ENCODE measurements at regions of chr10 and their contacts with region 1.

Region 1: GRCh38 chr10:35635576-35635975 is 6.5 kb downstream of the FZD8 start:
- DNase-seq: peak; percentile 100
- ATAC-seq: peak; percentile 21
- H3K4me3 ChIP-seq: peak overlapping the region; percentile 69
- H3K27ac ChIP-seq: peak overlapping the region; percentile 71
- H3K4me1 ChIP-seq: peaks cover 63% of the 10 kb centered on the region
- H3K27me3 ChIP-seq: no peaks in the 10 kb centered on the region
- CTCF ChIP-seq: peak; percentile 100

Region 2: GRCh38 chr10:35588836-35589235 is 46.7 kb before region 1 on chr10:
- CTCF ChIA-PET with region 1: no interaction called
- POLR2A ChIA-PET with region 1: no interaction called
- intact Hi-C with region 1: no loop called
- DNase-seq: no peak
- ATAC-seq: no peak
- H3K4me3 ChIP-seq: no peak overlapping the region
- H3K27ac ChIP-seq: no peak overlapping the region
- H3K4me1 ChIP-seq: no peaks in the 10 kb centered on the region
- H3K27me3 ChIP-seq: no peaks in the 10 kb centered on the region
- CTCF ChIP-seq: no peak

Region 3: DNA sequence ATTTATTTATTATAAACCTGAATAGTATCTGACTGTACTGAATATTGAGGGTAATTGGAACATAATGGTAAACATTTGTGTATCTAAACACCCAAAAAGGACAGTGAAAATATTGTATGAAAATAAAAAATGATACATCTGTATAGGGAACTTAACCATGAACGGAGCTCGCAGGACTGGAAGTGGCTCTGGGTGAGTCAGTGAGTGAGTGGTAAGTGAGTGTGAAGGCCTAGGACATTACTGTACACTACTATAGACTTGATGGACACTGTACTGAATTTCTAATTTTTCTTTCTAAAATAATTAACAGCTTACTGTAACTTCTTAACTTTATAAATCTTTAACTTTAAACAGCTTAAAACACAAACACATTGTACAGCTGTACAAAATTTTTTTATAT is 461.0 kb after region 1 on chr10:
- CTCF ChIA-PET with region 1: interaction called, 11 read pairs
- POLR2A ChIA-PET with region 1: interaction called, 9 read pairs
- intact Hi-C with region 1: loop called (anchors 1 kb)
- DNase-seq: peak; percentile 97
- ATAC-seq: peak; percentile 71
- H3K4me3 ChIP-seq: no peak overlapping the region
- H3K27ac ChIP-seq: peak overlapping the region; percentile 58
- H3K4me1 ChIP-seq: peaks cover 29% of the 10 kb centered on the region
- H3K27me3 ChIP-seq: no peaks in the 10 kb centered on the region
- CTCF ChIP-seq: no peak

Region 4: DNA sequence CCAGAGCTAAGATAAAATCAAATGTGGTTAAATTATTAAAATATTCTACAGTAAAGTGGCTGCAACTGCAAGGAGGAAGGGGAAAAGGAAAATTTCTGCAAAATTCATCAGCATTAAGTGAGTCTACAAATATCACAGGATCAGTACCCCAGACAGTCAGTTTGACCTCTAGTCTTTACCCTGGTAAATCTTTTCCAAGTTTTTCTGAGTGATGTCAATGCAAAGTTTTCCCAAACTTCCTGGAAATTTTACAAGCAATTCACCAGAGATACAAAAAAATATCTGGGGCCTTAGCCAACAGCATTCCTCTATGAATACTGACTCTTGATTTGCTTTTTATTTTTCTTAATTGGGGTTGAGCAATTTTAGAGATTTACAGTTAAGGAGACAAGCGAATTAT is 545.8 kb after region 1 on chr10:
- CTCF ChIA-PET with region 1: no interaction called
- POLR2A ChIA-PET with region 1: no interaction called
- intact Hi-C with region 1: no loop called
- DNase-seq: peak; percentile 73
- ATAC-seq: peak; percentile 69
- H3K4me3 ChIP-seq: no peak overlapping the region
- H3K27ac ChIP-seq: no peak overlapping the region
- H3K4me1 ChIP-seq: peaks cover 9% of the 10 kb centered on the region
- H3K27me3 ChIP-seq: no peaks in the 10 kb centered on the region
- CTCF ChIP-seq: no peak

Region 5: DNA sequence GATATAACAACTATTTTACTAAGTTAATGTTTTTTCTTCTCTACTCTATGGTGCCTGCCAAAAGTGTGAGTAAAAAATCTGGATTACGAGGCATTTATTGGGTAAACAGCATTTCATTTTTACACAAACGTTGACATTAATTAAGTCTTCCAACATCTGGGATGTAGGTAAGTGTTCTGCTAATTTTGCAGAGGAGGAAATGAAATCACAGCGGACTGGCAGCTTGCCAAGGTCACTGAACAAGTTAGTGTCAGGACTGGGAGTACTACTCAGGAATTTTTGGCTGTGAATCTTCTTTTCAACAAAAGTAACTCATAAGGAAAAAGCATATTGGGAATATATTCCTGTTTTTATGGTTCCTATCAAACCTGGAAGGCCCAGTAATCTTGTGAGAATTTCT is 618.6 kb after region 1 on chr10:
- CTCF ChIA-PET with region 1: interaction called, 3 read pairs
- POLR2A ChIA-PET with region 1: no interaction called
- intact Hi-C with region 1: loop called (anchors 10 kb)
- DNase-seq: peak; percentile 75
- ATAC-seq: peak; percentile 25
- H3K4me3 ChIP-seq: no peak overlapping the region
- H3K27ac ChIP-seq: no peak overlapping the region
- H3K4me1 ChIP-seq: peaks cover 21% of the 10 kb centered on the region
- H3K27me3 ChIP-seq: no peaks in the 10 kb centered on the region
- CTCF ChIP-seq: no peak

Region 6: GRCh38 chr10:36534471-36535002 is 899.0 kb after region 1 on chr10:
- CTCF ChIA-PET with region 1: interaction called, 11 read pairs
- POLR2A ChIA-PET with region 1: interaction called, 4 read pairs
- intact Hi-C with region 1: loop called (anchors 1 kb)
- DNase-seq: peak; percentile 100
- ATAC-seq: peak; percentile 82
- H3K4me3 ChIP-seq: no peak overlapping the region
- H3K27ac ChIP-seq: peak overlapping the region; percentile 83
- H3K4me1 ChIP-seq: peaks cover 63% of the 10 kb centered on the region
- H3K27me3 ChIP-seq: no peaks in the 10 kb centered on the region
- CTCF ChIP-seq: no peak

Region 7: DNA sequence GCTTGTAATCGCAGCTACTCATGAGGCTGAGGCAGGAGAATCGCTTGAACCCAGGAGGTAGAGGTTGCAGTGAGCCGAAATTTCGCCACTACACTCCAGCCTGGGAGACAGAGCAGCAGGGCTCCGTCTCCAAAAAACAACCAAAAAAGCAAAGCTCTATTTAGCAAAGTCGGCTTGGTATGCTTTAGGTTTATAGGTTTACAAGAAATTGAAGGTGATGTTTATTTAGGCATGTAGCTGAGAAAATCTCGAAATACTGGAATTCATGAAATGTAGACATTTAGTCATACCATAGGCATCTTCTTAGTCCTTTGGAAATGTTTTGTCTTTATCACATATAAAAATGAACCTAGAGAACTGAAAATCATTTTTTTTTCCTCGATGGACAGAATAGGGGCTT is 1036.0 kb after region 1 on chr10:
- CTCF ChIA-PET with region 1: interaction called, 3 read pairs
- POLR2A ChIA-PET with region 1: no interaction called
- intact Hi-C with region 1: loop called (anchors 1 kb)
- DNase-seq: peak; percentile 99
- ATAC-seq: peak; percentile 66
- H3K4me3 ChIP-seq: peak overlapping the region; percentile 26; the same call in 1 of the 2 replicates
- H3K27ac ChIP-seq: peak overlapping the region; percentile 70
- H3K4me1 ChIP-seq: peaks cover 46% of the 10 kb centered on the region
- H3K27me3 ChIP-seq: no peaks in the 10 kb centered on the region
- CTCF ChIP-seq: no peak

Region 8: DNA sequence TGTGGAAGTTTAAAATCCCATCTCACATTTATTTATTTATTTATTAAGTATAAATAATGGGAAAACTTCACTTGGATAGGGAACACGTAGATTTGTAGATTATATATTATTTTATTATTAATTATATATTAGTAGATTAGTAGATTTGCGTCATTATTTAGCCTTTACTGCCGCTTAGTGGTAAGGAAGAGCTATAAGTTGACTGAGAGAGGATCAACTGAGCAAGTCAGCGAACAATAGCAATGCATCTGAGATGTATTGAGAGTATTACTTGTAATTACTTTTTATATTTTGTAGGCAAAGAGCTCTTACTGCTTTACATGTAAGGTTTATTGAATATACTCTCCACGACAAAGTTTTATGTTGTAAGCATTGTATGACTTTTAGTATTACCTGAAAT is 1245.3 kb after region 1 on chr10:
- CTCF ChIA-PET with region 1: interaction called, 20 read pairs
- POLR2A ChIA-PET with region 1: interaction called, 3 read pairs
- intact Hi-C with region 1: loop called (anchors 1 kb)
- DNase-seq: peak; percentile 93
- ATAC-seq: peak; percentile 86
- H3K4me3 ChIP-seq: no peak overlapping the region
- H3K27ac ChIP-seq: no peak overlapping the region
- H3K4me1 ChIP-seq: no peaks in the 10 kb centered on the region
- H3K27me3 ChIP-seq: 0 out of 2 replicates have a peak, but pooled peaks cover 3% of the 10 kb centered on the region
- CTCF ChIP-seq: peak; percentile 86

Measured in PC-3 (cell line).